GM12878 (cell line): ENCODE measurements at regions of chr20 and their contacts with region 1.

Region 1: GRCh38 chr20:58471193-58472164 is 43.7 kb downstream of the APCDD1L start:
- DNase-seq: no peak
- ATAC-seq: no peak
- H3K4me3 ChIP-seq: no peak overlapping the region
- H3K27ac ChIP-seq: no peak overlapping the region
- H3K4me1 ChIP-seq: no peaks in the 10 kb centered on the region
- H3K27me3 ChIP-seq: no peaks in the 10 kb centered on the region
- CTCF ChIP-seq: no peak
- EP300 ChIP-seq: no peak
- POLR2A ChIP-seq: no peak
- RAD21 ChIP-seq: no peak

Region 2: GRCh38 chr20:57040924-57041323 is 1430.6 kb before region 1 on chr20:
- CTCF ChIA-PET with region 1: no interaction called
- POLR2A ChIA-PET with region 1: no interaction called
- RAD21 ChIA-PET with region 1: no interaction called
- SMC1A ChIA-PET with region 1: no interaction called
- in situ Hi-C with region 1: no loop called
- intact Hi-C with region 1: no loop called
- DNase-seq: no peak
- ATAC-seq: no peak
- H3K4me3 ChIP-seq: no peak overlapping the region
- H3K27ac ChIP-seq: no peak overlapping the region
- H3K4me1 ChIP-seq: no peaks in the 10 kb centered on the region
- H3K27me3 ChIP-seq: no peaks in the 10 kb centered on the region; a peak in 2 of 4 replicates
- CTCF ChIP-seq: no peak
- EP300 ChIP-seq: no peak
- POLR2A ChIP-seq: no peak
- RAD21 ChIP-seq: no peak

Region 3: DNA sequence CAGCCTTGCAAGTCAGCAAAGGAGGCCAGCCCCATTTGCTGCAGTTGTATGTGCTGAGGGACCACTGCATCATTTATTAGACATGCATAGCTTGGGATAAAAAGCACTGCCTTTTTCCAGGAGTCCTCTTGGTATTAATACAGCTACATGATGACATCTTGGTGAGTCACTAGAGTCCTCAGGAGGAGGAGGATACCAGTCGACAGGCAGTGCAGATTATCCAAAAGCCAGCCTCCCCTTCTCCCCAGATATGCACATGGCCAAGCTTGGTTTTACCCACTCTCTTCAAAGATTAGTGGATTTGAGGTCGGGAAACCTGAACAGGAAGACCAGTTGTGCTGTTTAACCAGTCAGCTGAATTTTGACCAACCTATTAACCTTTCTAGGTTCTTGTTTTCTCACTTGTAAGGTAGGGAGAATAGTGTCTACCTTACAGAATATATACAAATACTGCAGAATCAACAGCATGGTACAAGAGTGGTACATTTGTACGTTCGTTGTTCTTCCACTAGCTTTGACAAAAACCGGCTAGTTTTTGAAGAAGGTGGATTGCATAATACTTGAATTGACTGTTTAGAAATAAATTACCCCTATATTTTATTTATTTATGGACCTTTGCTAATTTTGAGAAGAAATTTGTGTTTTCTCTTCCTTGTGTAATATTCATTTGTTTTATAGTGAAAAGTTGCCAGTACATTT is 50.5 kb before region 1 on chr20:
- CTCF ChIA-PET with region 1: no interaction called
- POLR2A ChIA-PET with region 1: interaction called, 5 read pairs
- RAD21 ChIA-PET with region 1: no interaction called
- SMC1A ChIA-PET with region 1: no interaction called
- in situ Hi-C with region 1: loop called (anchors 5 kb)
- intact Hi-C with region 1: no loop called
- DNase-seq: no peak
- ATAC-seq: no peak
- H3K4me3 ChIP-seq: no peak overlapping the region
- H3K27ac ChIP-seq: no peak overlapping the region
- H3K4me1 ChIP-seq: no peaks in the 10 kb centered on the region; the same call in 1 of the 2 replicates
- H3K27me3 ChIP-seq: no peaks in the 10 kb centered on the region
- CTCF ChIP-seq: no peak
- EP300 ChIP-seq: no peak
- POLR2A ChIP-seq: no peak
- RAD21 ChIP-seq: no peak

Region 4: DNA sequence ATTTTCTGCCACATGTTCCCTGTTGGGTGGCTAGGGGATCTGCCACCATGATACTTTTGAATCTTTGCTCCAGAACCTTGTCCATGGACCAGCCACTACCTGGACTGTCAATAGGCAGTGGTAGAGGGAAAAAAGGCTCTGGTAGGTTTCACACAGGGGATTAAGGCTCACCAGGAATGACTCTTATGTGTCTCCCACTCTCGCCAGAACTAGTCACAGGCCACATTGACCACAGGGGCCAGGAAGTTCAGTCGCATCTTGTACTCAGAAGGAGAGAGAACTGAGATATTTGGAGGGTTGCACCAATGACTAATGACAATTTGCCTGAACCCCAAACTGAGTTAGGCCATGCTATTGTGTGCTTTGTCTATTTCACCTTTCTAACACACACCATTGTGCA is 67.3 kb after region 1 on chr20:
- CTCF ChIA-PET with region 1: no interaction called
- POLR2A ChIA-PET with region 1: no interaction called
- RAD21 ChIA-PET with region 1: no interaction called
- SMC1A ChIA-PET with region 1: no interaction called
- in situ Hi-C with region 1: loop called (anchors 10 kb)
- intact Hi-C with region 1: no loop called
- DNase-seq: no peak
- ATAC-seq: no peak
- H3K4me3 ChIP-seq: no peak overlapping the region
- H3K27ac ChIP-seq: no peak overlapping the region
- H3K4me1 ChIP-seq: no peaks in the 10 kb centered on the region
- H3K27me3 ChIP-seq: no peaks in the 10 kb centered on the region; a peak in 1 of 4 replicates
- CTCF ChIP-seq: no peak
- EP300 ChIP-seq: no peak
- POLR2A ChIP-seq: no peak
- RAD21 ChIP-seq: no peak